CD8-positive, alpha-beta T cell (primary cell): ENCODE measurements at regions of chr6 and their contacts with region 1.

Region 1: GRCh38 chr6:149925974-149926777 is 3.3 kb upstream of the RAET1G start:
- DNase-seq: peak; percentile 46 to 79 (median 72)
- ATAC-seq: peak; percentile 57
- H3K4me3 ChIP-seq: peak overlapping the region in 1 of 2 experiments; percentile 38
- H3K4me3 Mint-ChIP-seq: no peak overlapping the region
- H3K27ac ChIP-seq: no peak overlapping the region
- H3K27ac Mint-ChIP-seq: no peak overlapping the region
- H3K4me1 ChIP-seq: peaks cover 17% of the 10 kb centered on the region
- H3K4me1 Mint-ChIP-seq: peaks cover 34% of the 10 kb centered on the region
- H3K27me3 ChIP-seq: peaks cover 31 to 50% of the 10 kb centered on the region in 2 experiments
- H3K27me3 Mint-ChIP-seq: peaks cover 81% of the 10 kb centered on the region
- CTCF ChIP-seq: peak; percentile 78

Region 2: GRCh38 chr6:149723771-149724417 is 202.3 kb before region 1 on chr6:
- CTCF ChIA-PET with region 1: interaction called, 3 read pairs
- POLR2A ChIA-PET with region 1: no interaction called
- intact Hi-C with region 1: loop called (anchors 5 to 10 kb)
- DNase-seq: peak in 8 of 9 experiments; percentile 27 to 69 (median 44)
- ATAC-seq: peak; percentile 94
- H3K4me3 ChIP-seq: no peak overlapping the region
- H3K4me3 Mint-ChIP-seq: no peak overlapping the region
- H3K27ac ChIP-seq: no peak overlapping the region
- H3K27ac Mint-ChIP-seq: no peak overlapping the region
- H3K4me1 ChIP-seq: peaks cover 13% of the 10 kb centered on the region
- H3K4me1 Mint-ChIP-seq: peaks cover 18% of the 10 kb centered on the region
- H3K27me3 ChIP-seq: no peaks in the 10 kb centered on the region
- H3K27me3 Mint-ChIP-seq: no peaks in the 10 kb centered on the region
- CTCF ChIP-seq: peak; percentile 69

Region 3: GRCh38 chr6:149863697-149864577 is 62.2 kb before region 1 on chr6 and contains the start of gene LRP11:
- CTCF ChIA-PET with region 1: no interaction called
- POLR2A ChIA-PET with region 1: no interaction called
- intact Hi-C with region 1: loop called (anchors 2 kb)
- DNase-seq: peak; percentile 65 to 87 (median 77)
- ATAC-seq: peak; percentile 90
- H3K4me3 ChIP-seq: peak within 1 kb of the TSS; percentile 38 to 60
- H3K4me3 Mint-ChIP-seq: peak within 1 kb of the TSS; percentile 85
- H3K27ac ChIP-seq: peak within 1 kb of the TSS in 1 of 2 experiments; percentile 18
- H3K27ac Mint-ChIP-seq: no peak within 1 kb of the TSS
- H3K4me1 ChIP-seq: peaks cover 7% of the 10 kb centered on the region
- H3K4me1 Mint-ChIP-seq: peaks cover 11% of the 10 kb centered on the region
- H3K27me3 ChIP-seq: peaks cover 3 to 4% of the 10 kb centered on the region in 2 experiments
- H3K27me3 Mint-ChIP-seq: peaks cover 34% of the 10 kb centered on the region
- CTCF ChIP-seq: no peak
- total RNA-seq, gene LRP11: 0.17 TPM in 1 of 2 experiments, not detected in the other

Region 4: DNA sequence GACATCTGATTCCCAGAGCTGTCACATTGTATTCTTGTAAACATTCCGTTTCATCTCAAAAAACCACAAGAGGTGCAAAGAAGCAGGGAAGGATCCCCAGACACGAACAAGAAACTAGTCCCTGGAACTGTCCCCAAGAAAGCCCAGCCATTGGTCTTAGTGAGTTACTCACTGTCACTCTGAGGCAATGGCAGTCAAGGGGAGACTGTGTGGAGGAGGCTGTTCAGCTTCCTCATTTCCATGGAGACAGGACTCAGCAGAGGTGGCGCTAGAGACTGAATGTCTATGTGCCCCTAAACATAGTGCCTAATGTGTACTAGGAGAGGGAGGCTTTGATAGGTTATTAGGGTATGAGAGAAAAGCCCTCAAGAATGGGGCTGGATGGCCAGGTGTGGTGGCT is 48.6 kb after region 1 on chr6:
- CTCF ChIA-PET with region 1: no interaction called
- POLR2A ChIA-PET with region 1: no interaction called
- intact Hi-C with region 1: no loop called
- DNase-seq: no peak
- ATAC-seq: no peak
- H3K4me3 ChIP-seq: no peak overlapping the region
- H3K4me3 Mint-ChIP-seq: no peak overlapping the region
- H3K27ac ChIP-seq: no peak overlapping the region
- H3K27ac Mint-ChIP-seq: no peak overlapping the region
- H3K4me1 ChIP-seq: no peaks in the 10 kb centered on the region
- H3K4me1 Mint-ChIP-seq: no peaks in the 10 kb centered on the region
- H3K27me3 ChIP-seq: peaks cover 0 to 6% of the 10 kb centered on the region in 2 experiments
- H3K27me3 Mint-ChIP-seq: peaks cover 57% of the 10 kb centered on the region
- CTCF ChIP-seq: no peak